ENCODE measurements at regions of chr1 and their contacts with region 1.

Region 1: GRCh38 chr1:154982897-154983648 is at the start of gene FLAD1:
- DNase-seq: peak; percentile 85 to 99 (median 92)
- ATAC-seq: peak; percentile 99
- H3K4me3 ChIP-seq: peak within 1 kb of the TSS; percentile 64
- H3K4me3 Mint-ChIP-seq: no peak within 1 kb of the TSS
- H3K27ac ChIP-seq: peak within 1 kb of the TSS; percentile 13 to 54
- H3K27ac Mint-ChIP-seq: no peak within 1 kb of the TSS
- H3K4me1 ChIP-seq: peaks cover 28% of the 10 kb centered on the region
- H3K4me1 Mint-ChIP-seq: peaks cover 10% of the 10 kb centered on the region
- H3K27me3 ChIP-seq: no peaks in the 10 kb centered on the region
- H3K27me3 Mint-ChIP-seq: no peaks in the 10 kb centered on the region
- CTCF ChIP-seq: no peak
- total RNA-seq, gene FLAD1: 16.7 to 19.4 TPM

Region 2: DNA sequence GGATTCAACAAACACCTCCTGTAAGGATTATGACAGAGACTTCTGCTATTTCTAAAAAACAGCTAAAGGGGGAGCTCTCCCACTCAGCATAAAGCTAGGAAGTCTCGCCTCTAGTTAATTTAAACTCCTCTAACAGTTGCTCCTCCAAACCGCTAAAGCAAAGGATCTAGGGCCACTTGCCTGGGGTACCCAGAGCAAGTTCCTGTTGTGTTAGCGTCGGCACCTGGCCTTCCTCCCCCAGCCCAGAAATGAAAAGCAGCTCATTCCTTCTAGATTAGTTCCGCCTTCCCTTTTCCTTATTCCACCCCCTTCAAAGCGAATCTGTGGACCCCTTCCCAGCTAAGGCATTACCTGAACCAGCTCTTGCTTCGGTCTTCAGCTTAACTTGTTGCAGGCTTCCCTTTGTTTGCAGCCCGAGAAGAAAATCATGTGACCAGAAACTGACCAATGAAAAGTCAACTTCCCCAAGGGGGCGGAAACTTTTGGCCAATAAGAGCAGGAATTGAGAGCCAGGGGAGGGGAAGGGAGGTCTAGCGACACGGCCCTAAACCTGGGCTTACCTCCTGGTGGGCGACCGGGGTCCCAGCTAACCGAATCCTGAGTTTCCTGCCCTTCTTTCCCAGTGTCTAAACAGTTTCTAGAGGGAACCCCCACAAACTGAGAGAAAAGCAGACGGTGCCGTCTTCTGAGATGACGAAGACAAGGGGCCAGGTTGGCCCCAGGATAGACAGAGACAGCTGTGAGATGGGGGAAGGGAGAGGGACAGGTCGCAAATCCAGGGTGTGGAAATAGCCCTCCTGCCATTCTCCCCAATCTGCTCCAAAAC is 27.1 kb before region 1 on chr1 and contains the start of gene PBXIP1:
- CTCF ChIA-PET with region 1: interaction called, 8 read pairs
- POLR2A ChIA-PET with region 1: interaction called, 28 read pairs
- intact Hi-C with region 1: loop called in 1 of 2 experiments (anchors 2 kb)
- DNase-seq: peak; percentile 64 to 95 (median 78)
- ATAC-seq: peak; percentile 40
- H3K4me3 ChIP-seq: peak within 1 kb of the TSS; percentile 69
- H3K4me3 Mint-ChIP-seq: peak within 1 kb of the TSS; percentile 95
- H3K27ac ChIP-seq: peak within 1 kb of the TSS; percentile 100
- H3K27ac Mint-ChIP-seq: peak within 1 kb of the TSS; percentile 96
- H3K4me1 ChIP-seq: peaks cover 96% of the 10 kb centered on the region
- H3K4me1 Mint-ChIP-seq: peaks cover 57% of the 10 kb centered on the region
- H3K27me3 ChIP-seq: no peaks in the 10 kb centered on the region
- H3K27me3 Mint-ChIP-seq: no peaks in the 10 kb centered on the region
- CTCF ChIP-seq: peak; percentile 40
- total RNA-seq, gene PBXIP1: 434 to 440 TPM

Region 3: DNA sequence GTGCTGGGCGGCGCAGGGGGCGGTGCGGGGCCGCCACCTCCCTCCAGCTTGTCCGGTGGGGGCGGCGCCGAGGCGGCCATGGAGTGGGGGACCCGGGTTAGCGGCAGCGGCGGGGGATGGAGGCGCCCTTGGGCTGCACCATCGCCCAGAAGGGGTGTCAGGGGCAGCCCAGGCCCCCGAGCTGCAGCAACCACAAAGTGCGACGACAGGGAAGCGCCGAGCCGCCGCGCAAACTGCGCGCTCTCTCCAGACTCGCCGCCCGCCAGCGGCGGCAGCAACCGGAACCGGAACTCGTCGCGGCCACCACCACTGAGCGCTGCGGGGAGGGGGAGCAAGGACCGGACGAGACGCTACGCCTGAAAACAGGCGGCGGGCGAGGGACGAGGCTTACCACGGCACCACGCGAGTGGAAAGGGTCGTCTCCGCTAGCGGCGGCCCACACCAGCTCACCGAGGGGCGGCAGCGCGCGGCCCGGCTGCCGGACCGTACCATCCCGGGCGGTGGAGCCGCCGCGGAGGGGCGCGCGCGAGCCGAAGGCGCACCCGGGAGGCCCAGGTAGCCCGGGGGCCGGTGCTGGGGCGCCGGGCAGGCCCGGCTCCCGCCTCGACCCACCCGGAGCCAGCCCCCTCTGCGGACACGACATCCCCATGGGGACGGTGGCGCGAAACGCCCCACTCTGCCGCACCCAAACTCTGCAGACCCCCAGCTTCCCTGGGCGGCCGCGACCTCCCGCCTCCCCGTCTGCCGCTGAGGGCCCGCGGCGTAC is 21.4 kb before region 1 on chr1 and contains the start of gene PYGO2:
- CTCF ChIA-PET with region 1: interaction called, 8 read pairs
- POLR2A ChIA-PET with region 1: interaction called, 28 read pairs
- intact Hi-C with region 1: no loop called
- DNase-seq: peak; percentile 65 to 91 (median 77)
- ATAC-seq: peak; percentile 72
- H3K4me3 ChIP-seq: peak within 1 kb of the TSS; percentile 68
- H3K4me3 Mint-ChIP-seq: peak within 1 kb of the TSS; percentile 99
- H3K27ac ChIP-seq: peak within 1 kb of the TSS; percentile 88 to 95
- H3K27ac Mint-ChIP-seq: peak within 1 kb of the TSS; percentile 98
- H3K4me1 ChIP-seq: peaks cover 58% of the 10 kb centered on the region
- H3K4me1 Mint-ChIP-seq: peaks cover 20% of the 10 kb centered on the region
- H3K27me3 ChIP-seq: no peaks in the 10 kb centered on the region
- H3K27me3 Mint-ChIP-seq: no peaks in the 10 kb centered on the region
- CTCF ChIP-seq: peak; percentile 60
- total RNA-seq, gene PYGO2: 30.3 to 32.8 TPM

Region 4: DNA sequence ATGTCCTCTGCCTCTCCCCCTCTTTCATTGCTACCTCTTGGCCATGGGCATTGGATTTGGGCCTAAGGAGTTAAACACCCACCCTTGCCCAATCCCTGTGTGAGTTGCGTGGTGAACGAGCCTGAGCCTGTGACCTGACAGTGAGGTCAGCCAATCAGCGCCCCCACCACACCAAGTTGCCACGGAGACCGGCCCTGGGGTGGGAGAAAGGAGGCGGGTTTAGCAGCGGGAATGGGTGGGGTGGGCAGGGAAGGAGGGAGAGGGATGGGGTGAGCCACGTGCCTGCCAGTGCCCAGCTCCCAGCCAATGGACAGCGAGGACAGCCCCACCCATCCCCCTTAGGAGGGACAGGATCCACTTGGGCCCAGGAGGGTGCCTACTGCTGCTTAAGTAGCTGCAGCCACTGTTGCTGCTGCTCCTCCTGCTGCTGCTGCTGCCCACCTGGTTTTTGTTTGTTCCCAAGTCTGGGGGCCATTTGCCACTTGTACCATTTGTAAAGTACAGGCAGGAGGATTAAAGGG is 29.0 kb after region 1 on chr1:
- CTCF ChIA-PET with region 1: interaction called, 71 read pairs
- POLR2A ChIA-PET with region 1: interaction called, 52 read pairs
- intact Hi-C with region 1: loop called in 1 of 2 experiments (anchors 2 kb)
- DNase-seq: peak in 4 of 14 experiments; percentile 42 to 58 (median 51)
- ATAC-seq: no peak
- H3K4me3 ChIP-seq: peak overlapping the region; percentile 89
- H3K4me3 Mint-ChIP-seq: peak overlapping the region; percentile 91
- H3K27ac ChIP-seq: peak overlapping the region; percentile 87 to 88
- H3K27ac Mint-ChIP-seq: peak overlapping the region; percentile 92
- H3K4me1 ChIP-seq: peaks cover 99% of the 10 kb centered on the region
- H3K4me1 Mint-ChIP-seq: peaks cover 80% of the 10 kb centered on the region
- H3K27me3 ChIP-seq: no peaks in the 10 kb centered on the region
- H3K27me3 Mint-ChIP-seq: no peaks in the 10 kb centered on the region
- CTCF ChIP-seq: no peak

Region 5: GRCh38 chr1:155050560-155051341 is 67.7 kb after region 1 on chr1 and contains the start of gene ADAM15:
- CTCF ChIA-PET with region 1: interaction called, 3 read pairs
- POLR2A ChIA-PET with region 1: interaction called, 10 read pairs
- intact Hi-C with region 1: no loop called
- DNase-seq: peak; percentile 63 to 91 (median 74)
- ATAC-seq: peak; percentile 81
- H3K4me3 ChIP-seq: peak within 1 kb of the TSS; percentile 87
- H3K4me3 Mint-ChIP-seq: peak within 1 kb of the TSS; percentile 91
- H3K27ac ChIP-seq: peak within 1 kb of the TSS; percentile 55 to 61
- H3K27ac Mint-ChIP-seq: peak within 1 kb of the TSS; percentile 55
- H3K4me1 ChIP-seq: peaks cover 33% of the 10 kb centered on the region
- H3K4me1 Mint-ChIP-seq: peaks cover 26% of the 10 kb centered on the region
- H3K27me3 ChIP-seq: no peaks in the 10 kb centered on the region
- H3K27me3 Mint-ChIP-seq: no peaks in the 10 kb centered on the region
- CTCF ChIP-seq: peak; percentile 95
- total RNA-seq, gene ADAM15: 17.2 to 20.1 TPM

Measured in CD4-positive, alpha-beta T cell (primary cell).